Heart left ventricle (tissue), 16 donors: ENCODE measurements at regions of chr4 and their contacts with region 1.

Region 1: DNA sequence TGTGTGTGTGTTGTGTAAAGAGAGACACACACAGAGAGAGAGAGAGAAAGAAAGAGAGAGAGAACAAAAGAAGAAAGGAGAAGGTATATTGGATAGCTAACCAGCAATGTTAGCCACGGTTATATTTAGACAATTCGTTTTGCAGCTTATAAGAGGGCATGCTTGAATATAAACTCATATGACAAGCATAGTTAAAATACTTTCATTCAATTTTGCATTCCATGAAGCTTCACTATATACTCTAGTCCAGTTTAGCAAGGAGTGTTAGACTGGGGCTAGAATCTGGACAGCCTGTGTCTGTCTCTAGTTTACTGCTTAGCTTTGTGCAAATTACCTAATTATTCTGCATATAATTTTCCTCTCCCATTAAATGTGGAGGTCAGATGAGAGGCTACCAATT is 525.9 kb upstream of the ZFP42 start:
- DNase-seq: no peak
- ATAC-seq: no peak
- H3K4me3 ChIP-seq: no peak overlapping the region
- H3K27ac ChIP-seq: no peak overlapping the region
- H3K4me1 ChIP-seq: peaks cover 0 to 2% (median 0%) of the 10 kb centered on the region in 12 donors
- H3K27me3 ChIP-seq: no peaks in the 10 kb centered on the region
- CTCF ChIP-seq: no peak
- POLR2A ChIP-seq: no peak

Region 2: DNA sequence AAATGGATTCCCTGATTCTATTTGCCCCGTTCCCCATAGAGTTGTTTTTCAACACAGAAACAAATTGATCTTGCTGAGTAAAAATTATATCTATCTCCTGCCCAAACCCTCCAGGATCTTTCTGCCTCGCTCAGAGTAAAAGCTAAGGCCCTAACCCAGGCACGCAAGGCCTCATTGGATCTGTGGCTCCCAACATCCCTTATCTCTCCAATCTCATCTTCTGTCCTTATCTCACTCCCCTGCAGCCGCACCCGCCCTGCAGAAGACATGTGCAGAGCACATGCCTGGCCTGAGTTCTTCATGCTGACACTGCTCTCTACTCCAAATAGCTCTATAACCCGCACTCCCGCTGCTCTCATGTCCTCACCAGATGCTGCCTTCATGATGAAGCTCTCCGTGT is 17.9 kb before region 1 on chr4:
- intact Hi-C with region 1: loop called in 1 of 10 experiments (anchors 1 kb)
- DNase-seq: no peak
- ATAC-seq: no peak
- H3K4me3 ChIP-seq: no peak overlapping the region
- H3K27ac ChIP-seq: no peak overlapping the region
- H3K4me1 ChIP-seq: no peaks in the 10 kb centered on the region
- H3K27me3 ChIP-seq: no peaks in the 10 kb centered on the region
- CTCF ChIP-seq: no peak
- POLR2A ChIP-seq: no peak